Activated naive CD4-positive, alpha-beta T cell treated with anti-CD3 and anti-CD28 coated beads, Interleukin-2, amount 10 ng/mL, durations not matched to agents 7 days and 5 days (primary cell): ENCODE measurements at regions of chr20 and their contacts with region 1.

Region 1: DNA sequence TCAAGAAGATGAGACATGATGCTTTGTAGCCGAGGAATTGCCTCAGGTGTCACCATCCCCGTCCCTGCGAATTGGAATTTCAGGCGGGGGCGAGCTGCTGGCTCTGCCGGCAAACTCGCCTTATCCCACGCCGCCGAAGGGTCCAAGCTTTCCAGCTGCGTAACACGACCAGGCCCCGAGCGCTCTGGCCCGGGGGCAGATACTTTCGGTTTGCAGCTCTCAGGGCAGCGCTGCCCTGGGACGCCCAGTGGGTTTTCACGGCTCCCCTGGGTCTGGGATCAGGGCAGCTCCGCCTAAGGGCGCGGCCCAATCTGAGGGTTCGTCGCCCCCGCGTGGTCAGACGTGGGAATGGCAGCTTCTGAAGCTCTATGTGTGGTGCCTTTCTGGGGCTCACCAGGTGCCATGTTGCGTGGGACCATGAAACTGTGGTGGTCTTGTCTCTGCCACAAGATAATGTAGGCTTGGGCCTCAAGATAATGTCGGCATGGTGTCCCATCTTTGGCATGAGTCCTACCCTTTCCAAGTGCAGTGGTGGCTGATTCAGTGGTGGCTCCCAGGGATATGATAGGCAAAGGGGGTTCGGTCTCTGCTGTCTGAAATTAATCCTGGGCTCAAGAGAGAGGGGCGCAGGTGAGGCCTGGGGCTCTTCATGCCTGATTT is 20.9 kb downstream of the PIGT start:
- DNase-seq: peak; percentile 90
- H3K4me3 Mint-ChIP-seq: peak overlapping the region; percentile 73
- H3K27ac Mint-ChIP-seq: no peak overlapping the region
- H3K4me1 Mint-ChIP-seq: peaks cover 29% of the 10 kb centered on the region
- H3K27me3 Mint-ChIP-seq: peaks cover 7% of the 10 kb centered on the region

Region 2: GRCh38 chr20:45354423-45355208 is 82.2 kb before region 1 on chr20:
- CTCF ChIA-PET with region 1: interaction called, 382 read pairs
- DNase-seq: no peak
- H3K4me3 Mint-ChIP-seq: no peak overlapping the region
- H3K27ac Mint-ChIP-seq: no peak overlapping the region
- H3K4me1 Mint-ChIP-seq: peaks cover 53% of the 10 kb centered on the region
- H3K27me3 Mint-ChIP-seq: peaks cover 3% of the 10 kb centered on the region

Region 3: DNA sequence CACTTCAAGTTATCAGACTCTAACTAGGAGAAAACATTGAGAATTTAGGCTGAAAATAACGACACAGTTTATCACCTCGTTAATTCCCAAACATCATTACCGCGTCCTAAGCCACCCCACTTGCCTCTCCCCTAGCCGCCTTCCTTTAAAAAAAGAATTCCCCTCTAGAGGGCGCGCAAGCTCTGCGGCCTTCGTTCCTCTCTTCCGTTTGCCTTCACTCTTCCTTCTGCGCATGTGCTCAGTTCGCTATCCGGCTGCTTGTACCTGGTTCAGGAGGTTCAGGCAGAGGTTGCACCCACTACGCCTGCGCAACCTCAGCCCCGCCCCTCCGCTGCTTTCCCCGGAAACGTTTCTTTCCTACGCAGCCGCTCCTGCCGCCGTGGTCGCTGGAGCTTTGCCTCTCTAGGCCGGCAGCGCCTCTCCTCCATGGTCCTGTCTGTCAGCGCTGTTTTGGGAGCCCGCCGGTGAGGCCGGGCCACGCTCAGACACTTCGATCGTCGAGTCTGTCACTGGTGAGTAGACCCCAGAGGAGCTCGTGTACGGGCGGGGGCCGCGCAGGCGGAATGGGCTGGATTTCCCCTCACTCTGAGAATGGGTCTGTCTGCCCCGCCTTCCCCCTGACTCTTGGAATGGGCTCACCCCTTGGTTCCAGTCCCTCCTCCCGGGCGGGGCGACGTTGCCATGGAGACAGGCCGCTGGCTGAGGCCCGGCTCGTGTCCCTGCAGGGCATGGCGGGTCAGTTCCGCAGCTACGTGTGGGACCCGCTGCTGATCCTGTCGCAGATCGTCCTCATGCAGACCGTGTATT is 73.9 kb before region 1 on chr20 and contains the start of gene SYS1:
- CTCF ChIA-PET with region 1: interaction called, 382 read pairs
- DNase-seq: peak; percentile 99
- H3K4me3 Mint-ChIP-seq: peak within 1 kb of the TSS; percentile 91
- H3K27ac Mint-ChIP-seq: peak within 1 kb of the TSS; percentile 91
- H3K4me1 Mint-ChIP-seq: peaks cover 54% of the 10 kb centered on the region
- H3K27me3 Mint-ChIP-seq: no peaks in the 10 kb centered on the region

Region 4: GRCh38 chr20:45392733-45393132 is 44.1 kb before region 1 on chr20:
- CTCF ChIA-PET with region 1: interaction called, 12 read pairs
- DNase-seq: no peak
- H3K4me3 Mint-ChIP-seq: no peak overlapping the region
- H3K27ac Mint-ChIP-seq: no peak overlapping the region
- H3K4me1 Mint-ChIP-seq: no peaks in the 10 kb centered on the region
- H3K27me3 Mint-ChIP-seq: no peaks in the 10 kb centered on the region

Region 5: DNA sequence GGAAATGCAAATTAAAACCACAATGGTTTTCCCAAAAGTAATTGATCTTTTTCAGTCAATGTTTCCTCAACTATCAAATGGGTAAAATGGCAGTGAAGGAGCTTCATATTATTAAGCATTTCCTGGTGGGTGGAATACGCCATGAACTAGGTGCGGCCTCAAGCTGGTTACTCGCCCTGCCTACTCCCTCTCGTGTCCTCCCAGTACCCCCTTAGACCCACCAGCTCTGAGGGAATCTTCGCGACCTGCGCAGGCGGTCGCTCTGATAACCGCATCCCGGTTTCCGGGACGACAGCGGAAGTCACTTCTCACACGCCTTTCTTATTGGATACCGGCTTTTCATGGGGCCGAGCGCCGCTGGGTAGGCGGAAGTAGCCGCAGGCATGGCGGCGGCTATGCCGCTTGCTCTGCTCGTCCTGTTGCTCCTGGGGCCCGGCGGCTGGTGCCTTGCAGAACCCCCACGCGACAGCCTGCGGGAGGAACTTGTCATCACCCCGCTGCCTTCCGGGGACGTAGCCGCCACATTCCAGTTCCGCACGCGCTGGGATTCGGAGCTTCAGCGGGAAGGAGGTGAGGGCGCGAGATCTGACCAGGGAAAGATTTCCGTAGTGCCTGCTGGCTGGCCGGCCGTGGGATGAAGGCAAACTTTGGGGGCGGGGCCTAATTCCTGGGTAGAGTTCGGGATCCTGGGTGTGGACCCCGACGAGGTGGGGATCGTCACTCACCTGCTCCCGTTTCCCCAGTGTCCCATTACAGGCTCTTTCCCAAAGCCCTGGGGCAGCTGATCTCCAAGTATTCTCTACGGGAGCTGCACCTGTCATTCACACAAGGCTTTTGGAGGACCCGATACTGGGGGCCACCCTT is 20.9 kb before region 1 on chr20 and contains the start of gene PIGT:
- CTCF ChIA-PET with region 1: interaction called, 16 read pairs
- DNase-seq: peak; percentile 93
- H3K4me3 Mint-ChIP-seq: peak within 1 kb of the TSS; percentile 92
- H3K27ac Mint-ChIP-seq: peak within 1 kb of the TSS; percentile 91
- H3K4me1 Mint-ChIP-seq: peaks cover 34% of the 10 kb centered on the region
- H3K27me3 Mint-ChIP-seq: peaks cover 3% of the 10 kb centered on the region

Region 6: DNA sequence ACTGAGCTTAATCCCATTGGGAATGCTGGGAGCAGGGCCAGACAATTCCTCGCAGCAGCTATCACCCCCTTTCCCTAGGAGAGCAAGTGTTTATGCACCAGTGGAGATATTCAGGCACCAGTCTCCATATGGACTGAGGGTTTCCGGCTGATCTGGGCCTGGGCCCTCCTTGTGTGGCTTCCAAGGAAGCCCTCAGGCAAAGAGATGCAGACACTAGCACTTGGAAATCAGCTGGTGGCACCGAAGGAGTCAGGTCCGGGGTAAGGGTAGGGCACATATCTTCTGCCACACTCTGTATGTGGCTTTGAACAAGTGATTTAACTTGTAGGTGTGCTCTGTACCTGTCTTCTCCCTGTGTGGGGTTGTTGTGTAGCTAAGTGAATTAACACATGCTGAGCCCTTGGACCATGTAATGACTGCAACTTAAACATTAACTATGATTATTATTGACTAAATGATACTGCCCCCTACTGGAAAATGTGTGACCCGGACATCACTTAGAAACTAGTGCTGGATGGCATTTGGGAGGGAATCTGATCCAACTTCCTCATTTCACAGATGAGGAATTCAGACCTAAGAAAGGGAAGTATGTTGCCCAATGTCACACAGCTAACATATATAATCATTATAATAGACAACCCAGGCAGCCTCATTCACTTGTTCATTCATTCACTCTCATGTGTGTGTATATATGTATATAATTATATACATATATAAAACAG is 13.4 kb after region 1 on chr20:
- CTCF ChIA-PET with region 1: interaction called, 68 read pairs
- DNase-seq: peak; percentile 41
- H3K4me3 Mint-ChIP-seq: no peak overlapping the region
- H3K27ac Mint-ChIP-seq: no peak overlapping the region
- H3K4me1 Mint-ChIP-seq: peaks cover 11% of the 10 kb centered on the region
- H3K27me3 Mint-ChIP-seq: peaks cover 24% of the 10 kb centered on the region